GM12878 (cell line): ENCODE measurements at regions of chr2 and their contacts with region 1.

Region 1: GRCh38 chr2:197310271-197310985 is at the start of gene ANKRD44:
- DNase-seq: no peak
- ATAC-seq: peak; percentile 73
- H3K4me3 ChIP-seq: peak within 1 kb of the TSS; percentile 98
- H3K27ac ChIP-seq: peak within 1 kb of the TSS; percentile 99
- H3K4me1 ChIP-seq: peaks cover 21% of the 10 kb centered on the region
- H3K27me3 ChIP-seq: no peaks in the 10 kb centered on the region
- CTCF ChIP-seq: peak; percentile 17 to 64 (median 23); a peak in 3 of 6 replicates
- EP300 ChIP-seq: 0 out of 4 replicates have a peak, but pooled peaks of 1 of the 2 experiments have one; percentile 21
- POLR2A ChIP-seq: peak; percentile 80
- RAD21 ChIP-seq: peak; percentile 55
- polyA plus RNA-seq, gene ANKRD44: 19.1 to 29.1 TPM

Region 2: GRCh38 chr2:195709901-195710806 is 1600.3 kb before region 1 on chr2:
- CTCF ChIA-PET with region 1: no interaction called
- POLR2A ChIA-PET with region 1: no interaction called
- RAD21 ChIA-PET with region 1: no interaction called
- SMC1A ChIA-PET with region 1: no interaction called
- in situ Hi-C with region 1: no loop called
- intact Hi-C with region 1: no loop called
- DNase-seq: no peak
- ATAC-seq: no peak
- H3K4me3 ChIP-seq: no peak overlapping the region
- H3K27ac ChIP-seq: no peak overlapping the region
- H3K4me1 ChIP-seq: no peaks in the 10 kb centered on the region
- H3K27me3 ChIP-seq: no peaks in the 10 kb centered on the region
- CTCF ChIP-seq: no peak
- EP300 ChIP-seq: no peak
- POLR2A ChIP-seq: no peak
- RAD21 ChIP-seq: no peak

Region 3: GRCh38 chr2:197130318-197130717 is 180.1 kb before region 1 on chr2:
- CTCF ChIA-PET with region 1: no interaction called
- POLR2A ChIA-PET with region 1: interaction called, 4 read pairs
- RAD21 ChIA-PET with region 1: interaction called, 3 read pairs
- SMC1A ChIA-PET with region 1: no interaction called
- in situ Hi-C with region 1: no loop called
- intact Hi-C with region 1: loop called (anchors 1 kb)
- DNase-seq: peak; percentile 77
- ATAC-seq: peak; percentile 87
- H3K4me3 ChIP-seq: peak overlapping the region; percentile 43; the same call in 1 of the 2 replicates
- H3K27ac ChIP-seq: peak overlapping the region; percentile 86
- H3K4me1 ChIP-seq: peaks cover 29% of the 10 kb centered on the region
- H3K27me3 ChIP-seq: no peaks in the 10 kb centered on the region
- CTCF ChIP-seq: no peak
- EP300 ChIP-seq: no peak; a peak in 1 of 4 replicates
- POLR2A ChIP-seq: no peak
- RAD21 ChIP-seq: no peak

Region 4: DNA sequence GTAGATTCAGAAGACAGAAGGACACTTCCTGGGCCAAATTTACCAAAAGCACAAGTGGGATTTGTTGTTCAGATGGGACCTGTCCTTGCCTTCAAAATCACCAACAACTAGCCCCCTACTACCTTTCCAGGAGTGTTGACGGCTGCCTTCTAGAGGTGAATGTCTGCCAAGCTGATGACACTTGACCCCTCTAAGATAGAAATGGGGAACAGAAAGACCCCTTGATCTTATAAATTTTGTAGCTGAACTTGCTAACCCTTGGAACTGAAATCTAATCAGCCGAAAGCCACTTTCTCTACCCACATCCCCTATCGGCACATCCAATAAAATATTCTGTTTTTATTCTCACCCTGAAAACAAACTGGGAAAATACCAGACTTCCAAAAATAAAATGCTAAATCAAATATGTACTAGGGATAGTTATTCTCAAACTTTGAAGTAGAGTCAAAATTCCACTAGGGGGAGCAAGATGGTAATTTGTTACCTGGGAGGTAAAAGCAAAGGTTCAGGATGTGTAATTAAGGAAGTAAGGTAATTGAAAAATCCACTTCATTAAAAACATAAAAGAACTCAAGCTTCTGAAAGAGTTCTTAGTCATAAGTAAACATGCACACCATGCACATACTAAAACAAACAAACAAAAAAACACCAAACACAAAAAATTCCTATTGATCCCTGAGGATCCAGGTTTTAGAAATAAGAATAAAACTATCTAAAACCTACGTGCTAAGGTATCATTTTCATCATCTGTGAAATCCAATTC is 119.1 kb before region 1 on chr2:
- CTCF ChIA-PET with region 1: interaction called, 128 read pairs
- POLR2A ChIA-PET with region 1: interaction called, 43 read pairs
- RAD21 ChIA-PET with region 1: interaction called, 210 read pairs
- SMC1A ChIA-PET with region 1: interaction called, 204 read pairs
- in situ Hi-C with region 1: loop called (anchors 5 kb)
- intact Hi-C with region 1: loop called (anchors 1 kb)
- DNase-seq: no peak
- ATAC-seq: peak; percentile 81
- H3K4me3 ChIP-seq: no peak overlapping the region
- H3K27ac ChIP-seq: peak overlapping the region; percentile 17; the same call in 1 of the 2 replicates
- H3K4me1 ChIP-seq: peaks cover 16% of the 10 kb centered on the region; the same call in 1 of the 2 replicates
- H3K27me3 ChIP-seq: no peaks in the 10 kb centered on the region
- CTCF ChIP-seq: peak; percentile 57 to 69 (median 61)
- EP300 ChIP-seq: no peak
- POLR2A ChIP-seq: no peak
- RAD21 ChIP-seq: peak; percentile 91

Region 5: DNA sequence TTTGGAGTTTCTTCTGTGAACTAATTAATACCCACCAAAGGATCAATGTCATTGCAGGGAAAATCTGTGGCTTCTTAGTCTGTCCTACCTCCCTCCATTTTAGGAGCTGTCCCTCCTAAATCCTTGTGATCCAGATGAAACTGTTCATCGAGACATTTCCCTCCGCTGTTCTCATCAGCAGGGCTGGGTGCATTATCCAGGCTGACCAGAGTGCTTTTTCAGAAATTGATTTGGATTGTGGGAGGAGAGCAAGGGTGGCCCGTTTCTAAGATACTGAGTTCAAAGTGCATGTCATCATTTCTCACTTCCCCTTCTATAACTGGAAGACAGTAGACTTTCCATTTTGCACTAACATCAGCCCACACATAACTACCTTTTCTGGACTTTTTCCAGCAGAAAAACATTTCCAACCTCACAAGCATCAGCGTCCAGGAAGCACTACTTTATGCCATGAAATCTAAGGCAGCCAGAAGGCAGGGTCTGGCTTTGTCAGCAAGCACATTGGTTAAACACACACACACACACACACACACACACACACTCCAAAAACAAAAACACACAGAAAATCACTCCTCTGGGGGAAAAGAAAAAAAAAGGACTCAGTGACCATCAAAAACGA is 94.0 kb before region 1 on chr2:
- CTCF ChIA-PET with region 1: interaction called, 34 read pairs
- POLR2A ChIA-PET with region 1: interaction called, 31 read pairs
- RAD21 ChIA-PET with region 1: interaction called, 408 read pairs
- SMC1A ChIA-PET with region 1: interaction called, 433 read pairs
- in situ Hi-C with region 1: no loop called
- intact Hi-C with region 1: loop called (anchors 2 kb)
- DNase-seq: peak; percentile 80
- ATAC-seq: peak; percentile 73
- H3K4me3 ChIP-seq: peak overlapping the region; percentile 34
- H3K27ac ChIP-seq: peak overlapping the region; percentile 82
- H3K4me1 ChIP-seq: peaks cover 70% of the 10 kb centered on the region
- H3K27me3 ChIP-seq: no peaks in the 10 kb centered on the region
- CTCF ChIP-seq: no peak
- EP300 ChIP-seq: peak; percentile 46 to 74; a peak in 3 of 4 replicates
- POLR2A ChIP-seq: 0 out of 2 replicates have a peak, but pooled peaks have one; percentile 23
- RAD21 ChIP-seq: 0 out of 2 replicates have a peak, but pooled peaks have one; percentile 16

Region 6: DNA sequence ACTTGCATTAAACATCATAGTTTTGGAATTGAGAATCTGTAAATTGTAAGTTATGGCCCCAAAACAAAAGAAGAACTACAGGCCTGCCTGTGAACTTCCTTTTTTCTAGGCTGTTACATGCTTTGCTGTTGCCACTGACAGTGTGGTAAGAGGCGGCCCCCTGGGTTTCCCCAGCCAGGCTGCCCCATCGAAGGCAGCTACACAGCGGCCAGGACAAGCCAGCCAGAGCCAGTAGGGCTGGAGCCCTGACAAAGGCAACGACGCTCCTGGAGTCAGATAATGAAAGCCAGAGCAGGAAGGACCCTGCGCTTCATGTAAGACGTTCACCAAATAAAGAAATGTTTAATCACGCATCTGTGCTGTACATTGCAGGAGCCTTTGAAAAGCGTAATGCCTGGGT is 54.9 kb before region 1 on chr2:
- CTCF ChIA-PET with region 1: interaction called, 68 read pairs
- POLR2A ChIA-PET with region 1: interaction called, 85 read pairs
- RAD21 ChIA-PET with region 1: interaction called, 178 read pairs
- SMC1A ChIA-PET with region 1: interaction called, 165 read pairs
- in situ Hi-C with region 1: no loop called
- intact Hi-C with region 1: loop called (anchors 2 kb)
- DNase-seq: peak; percentile 81
- ATAC-seq: peak; percentile 94
- H3K4me3 ChIP-seq: peak overlapping the region; percentile 59
- H3K27ac ChIP-seq: peak overlapping the region; percentile 97
- H3K4me1 ChIP-seq: peaks cover 31% of the 10 kb centered on the region
- H3K27me3 ChIP-seq: no peaks in the 10 kb centered on the region
- CTCF ChIP-seq: no peak
- EP300 ChIP-seq: peak; percentile 57 to 66; a peak in 3 of 4 replicates
- POLR2A ChIP-seq: peak; percentile 98
- RAD21 ChIP-seq: peak; percentile 20; the same call in 1 of the 2 replicates

Region 7: GRCh38 chr2:197286805-197287598 is 23.4 kb before region 1 on chr2:
- CTCF ChIA-PET with region 1: interaction called, 94 read pairs
- POLR2A ChIA-PET with region 1: interaction called, 139 read pairs
- RAD21 ChIA-PET with region 1: interaction called, 180 read pairs
- SMC1A ChIA-PET with region 1: interaction called, 159 read pairs
- in situ Hi-C with region 1: no loop called
- intact Hi-C with region 1: no loop called
- DNase-seq: no peak
- ATAC-seq: peak; percentile 95
- H3K4me3 ChIP-seq: no peak overlapping the region; the same call in 1 of the 2 replicates
- H3K27ac ChIP-seq: peak overlapping the region; percentile 71
- H3K4me1 ChIP-seq: peaks cover 26% of the 10 kb centered on the region
- H3K27me3 ChIP-seq: no peaks in the 10 kb centered on the region
- CTCF ChIP-seq: no peak
- EP300 ChIP-seq: no peak
- POLR2A ChIP-seq: no peak
- RAD21 ChIP-seq: no peak

Region 8: GRCh38 chr2:197378494-197379307 is 68.3 kb after region 1 on chr2:
- CTCF ChIA-PET with region 1: no interaction called
- POLR2A ChIA-PET with region 1: no interaction called
- RAD21 ChIA-PET with region 1: interaction called, 6 read pairs
- SMC1A ChIA-PET with region 1: interaction called, 5 read pairs
- in situ Hi-C with region 1: no loop called
- intact Hi-C with region 1: loop called (anchors 2 kb)
- DNase-seq: no peak
- ATAC-seq: peak; percentile 80
- H3K4me3 ChIP-seq: no peak overlapping the region
- H3K27ac ChIP-seq: no peak overlapping the region
- H3K4me1 ChIP-seq: peaks cover 12% of the 10 kb centered on the region
- H3K27me3 ChIP-seq: no peaks in the 10 kb centered on the region; a peak in 1 of 4 replicates
- CTCF ChIP-seq: peak; percentile 64 to 80 (median 80)
- EP300 ChIP-seq: no peak
- POLR2A ChIP-seq: no peak
- RAD21 ChIP-seq: peak; percentile 99

Region 9: GRCh38 chr2:197480165-197481036 is 170.0 kb after region 1 on chr2:
- CTCF ChIA-PET with region 1: no interaction called
- POLR2A ChIA-PET with region 1: no interaction called
- RAD21 ChIA-PET with region 1: no interaction called
- SMC1A ChIA-PET with region 1: no interaction called
- in situ Hi-C with region 1: no loop called
- intact Hi-C with region 1: no loop called
- DNase-seq: no peak
- ATAC-seq: no peak
- H3K4me3 ChIP-seq: no peak overlapping the region
- H3K27ac ChIP-seq: no peak overlapping the region
- H3K4me1 ChIP-seq: no peaks in the 10 kb centered on the region
- H3K27me3 ChIP-seq: no peaks in the 10 kb centered on the region
- CTCF ChIP-seq: no peak
- EP300 ChIP-seq: no peak
- POLR2A ChIP-seq: peak; percentile 16; the same call in 1 of the 2 replicates
- RAD21 ChIP-seq: no peak

Region 10: DNA sequence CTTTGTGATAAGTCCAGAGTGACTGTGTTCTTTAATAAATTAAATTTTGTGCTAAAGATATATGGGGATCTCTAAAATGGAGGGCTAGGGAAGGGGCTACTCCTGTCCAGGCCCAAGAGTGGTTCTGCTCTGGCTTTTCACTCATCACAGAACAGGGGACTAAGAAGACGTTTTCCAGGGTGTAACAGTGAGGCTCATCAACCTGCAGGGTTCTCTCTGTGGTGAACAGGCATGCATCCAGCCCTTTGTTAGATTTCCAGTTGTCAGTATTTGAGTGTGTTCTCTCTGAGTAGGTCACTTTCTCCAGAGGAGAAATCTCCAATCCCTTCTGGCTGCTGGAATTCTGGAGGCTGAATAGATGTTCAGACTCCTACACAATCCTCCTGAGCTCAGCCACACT is 902.8 kb after region 1 on chr2:
- CTCF ChIA-PET with region 1: no interaction called
- POLR2A ChIA-PET with region 1: no interaction called
- RAD21 ChIA-PET with region 1: no interaction called
- SMC1A ChIA-PET with region 1: no interaction called
- in situ Hi-C with region 1: no loop called
- intact Hi-C with region 1: no loop called
- DNase-seq: no peak
- ATAC-seq: no peak
- H3K4me3 ChIP-seq: no peak overlapping the region
- H3K27ac ChIP-seq: no peak overlapping the region
- H3K4me1 ChIP-seq: no peaks in the 10 kb centered on the region
- H3K27me3 ChIP-seq: no peaks in the 10 kb centered on the region
- CTCF ChIP-seq: no peak
- EP300 ChIP-seq: no peak
- POLR2A ChIP-seq: no peak
- RAD21 ChIP-seq: no peak